ENCODE measurements at regions of chrX and their contacts with region 1.

Region 1: DNA sequence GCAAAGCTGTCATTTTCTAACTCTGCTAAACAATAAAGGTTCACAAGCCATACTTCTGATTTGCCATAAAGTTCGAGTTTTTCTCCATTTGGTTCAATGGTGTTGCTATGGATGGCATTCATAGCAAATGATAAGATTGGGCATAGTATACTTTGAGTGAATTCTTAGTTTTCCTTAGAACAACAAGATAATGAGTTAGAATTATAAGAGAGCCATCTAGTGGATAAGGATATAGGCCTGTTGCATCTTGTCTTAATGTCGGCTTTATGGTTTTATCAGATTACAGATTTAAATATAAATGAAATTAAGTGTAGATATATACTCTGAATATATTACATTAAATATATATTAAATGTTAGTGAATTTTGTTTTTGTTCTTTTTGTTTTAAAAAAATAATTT is 644.6 kb downstream of the IL1RAPL1 start:
- DNase-seq: no peak
- H3K4me3 ChIP-seq: no peak overlapping the region
- H3K27ac ChIP-seq: no peak overlapping the region
- H3K4me1 ChIP-seq: no peaks in the 10 kb centered on the region
- H3K27me3 ChIP-seq: peaks cover 4% of the 10 kb centered on the region
- CTCF ChIP-seq: peak; percentile 42 to 60

Region 2: DNA sequence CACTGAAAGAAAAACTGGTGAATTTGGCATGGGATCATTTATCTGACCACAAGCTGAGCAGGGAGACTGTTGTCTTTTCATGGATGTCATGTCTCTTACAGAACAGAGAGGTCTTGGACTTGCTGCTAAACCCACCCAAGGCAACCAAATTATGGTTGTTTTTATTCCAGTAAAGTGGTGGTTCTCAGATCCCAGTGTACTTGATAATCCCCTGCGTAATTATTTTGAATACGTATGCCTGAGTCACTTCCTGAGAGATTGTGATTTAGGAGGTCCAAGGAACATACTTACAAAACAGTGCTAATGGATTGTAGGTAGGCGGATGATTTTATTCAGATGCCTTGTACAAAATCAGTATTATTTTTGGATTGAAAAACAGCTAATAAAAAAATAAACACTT is 58.9 kb before region 1 on chrX:
- CTCF ChIA-PET with region 1: no interaction called
- dilution Hi-C with region 1: no loop called
- in situ Hi-C with region 1: no loop called
- intact Hi-C with region 1: no loop called
- DNase-seq: no peak
- H3K4me3 ChIP-seq: no peak overlapping the region
- H3K27ac ChIP-seq: no peak overlapping the region
- H3K4me1 ChIP-seq: no peaks in the 10 kb centered on the region
- H3K27me3 ChIP-seq: no peaks in the 10 kb centered on the region
- CTCF ChIP-seq: no peak

Region 3: DNA sequence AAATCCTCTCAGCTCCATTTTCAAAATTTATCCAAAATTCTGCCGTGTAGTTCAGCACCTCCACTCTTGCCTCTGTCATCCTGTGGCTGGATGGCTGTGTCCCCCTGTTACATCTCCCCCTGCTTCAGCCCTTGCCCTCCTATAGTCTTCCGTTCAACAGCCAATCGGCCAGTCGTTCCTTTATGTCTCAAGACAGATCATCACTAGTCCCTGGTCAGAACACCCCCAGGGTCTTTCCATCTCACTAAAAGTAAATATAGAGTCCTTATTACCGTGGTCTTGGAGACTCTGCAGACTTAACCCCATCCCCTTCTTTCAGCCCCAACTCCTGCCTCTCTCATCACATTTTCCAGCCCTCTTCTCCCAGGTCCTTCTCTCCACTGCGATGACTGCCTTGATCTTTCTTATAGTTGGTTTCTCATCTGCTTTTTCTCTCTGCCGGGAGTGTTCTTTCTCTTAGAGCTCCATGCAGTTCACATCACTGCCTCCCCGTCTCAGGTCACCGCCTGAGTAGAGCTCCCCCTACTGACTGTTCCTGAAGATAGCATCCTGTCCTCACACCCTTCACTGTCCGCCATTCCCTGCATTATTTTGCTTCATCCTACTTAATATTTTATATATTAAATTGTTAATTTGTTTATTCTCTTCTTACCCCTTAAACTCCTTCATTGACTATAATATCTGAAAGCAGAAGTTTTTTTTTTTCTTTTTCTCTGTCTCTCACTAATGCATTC is 246.7 kb after region 1 on chrX:
- CTCF ChIA-PET with region 1: no interaction called
- dilution Hi-C with region 1: no loop called
- in situ Hi-C with region 1: no loop called
- intact Hi-C with region 1: loop called (anchors 5 kb)
- DNase-seq: peak; percentile 19
- H3K4me3 ChIP-seq: no peak overlapping the region
- H3K27ac ChIP-seq: no peak overlapping the region
- H3K4me1 ChIP-seq: no peaks in the 10 kb centered on the region
- H3K27me3 ChIP-seq: no peaks in the 10 kb centered on the region
- CTCF ChIP-seq: peak; percentile 79 to 86